ENCODE measurements at regions of chr3 and their contacts with region 1.

Region 1: GRCh38 chr3:48739955-48740823 is 23.2 kb upstream of the IP6K2 start:
- DNase-seq: peak; percentile 89 to 92
- ATAC-seq: peak; percentile 86 to 95 (median 92)
- H3K4me3 ChIP-seq: peak overlapping the region in 7 of 10 donors; percentile 0 to 27 (median 3)
- H3K27ac ChIP-seq: peak overlapping the region; percentile 51 to 92 (median 84)
- H3K4me1 ChIP-seq: peaks cover 28 to 61% (median 48%) of the 10 kb centered on the region in 9 donors
- H3K27me3 ChIP-seq: no peaks in the 10 kb centered on the region
- CTCF ChIP-seq: peak; percentile 84 to 95 (median 89)

Region 2: DNA sequence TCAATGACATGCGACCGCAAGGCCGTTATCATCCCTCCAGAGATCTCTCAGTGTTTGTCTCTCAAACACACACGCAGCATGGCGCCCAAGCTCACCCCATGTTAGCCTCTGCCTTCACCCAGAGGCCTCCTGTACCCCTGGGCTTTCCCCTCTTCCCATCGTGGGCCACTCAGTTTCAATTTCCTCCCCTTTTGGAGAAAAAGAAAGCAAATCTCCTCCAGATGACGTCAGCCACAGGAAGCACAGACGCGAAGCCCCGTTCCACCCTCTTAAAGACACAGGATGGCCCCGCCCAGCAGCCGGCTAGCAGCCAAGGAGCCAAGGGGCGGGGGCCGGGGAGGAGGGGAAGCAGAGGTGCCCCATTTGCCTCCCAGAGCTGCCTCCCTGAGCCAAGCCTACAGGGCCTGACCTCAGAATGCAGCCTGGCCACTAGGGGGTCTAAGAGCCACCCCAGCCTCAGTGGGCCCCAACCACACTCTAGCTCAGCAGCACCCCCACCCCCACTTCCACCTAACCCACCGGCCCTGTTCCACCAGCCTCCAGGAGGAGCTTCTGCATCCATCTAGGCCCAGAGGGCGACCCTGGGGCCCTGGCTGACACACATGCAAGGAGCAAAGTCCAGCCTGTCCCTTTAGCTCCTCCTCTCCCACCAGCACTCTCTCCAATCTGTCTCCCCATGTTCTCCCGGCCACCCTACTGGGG is 267.1 kb before region 1 on chr3:
- intact Hi-C with region 1: no loop called
- DNase-seq: peak; percentile 92 to 95
- ATAC-seq: peak; percentile 92 to 95 (median 94)
- H3K4me3 ChIP-seq: peak overlapping the region; percentile 58 to 81 (median 64)
- H3K27ac ChIP-seq: peak overlapping the region; percentile 89 to 99 (median 95)
- H3K4me1 ChIP-seq: peaks cover 12 to 71% (median 60%) of the 10 kb centered on the region in 9 donors
- H3K27me3 ChIP-seq: no peaks in the 10 kb centered on the region
- CTCF ChIP-seq: peak in 8 of 9 donors; percentile 24 to 66 (median 44)

Region 3: DNA sequence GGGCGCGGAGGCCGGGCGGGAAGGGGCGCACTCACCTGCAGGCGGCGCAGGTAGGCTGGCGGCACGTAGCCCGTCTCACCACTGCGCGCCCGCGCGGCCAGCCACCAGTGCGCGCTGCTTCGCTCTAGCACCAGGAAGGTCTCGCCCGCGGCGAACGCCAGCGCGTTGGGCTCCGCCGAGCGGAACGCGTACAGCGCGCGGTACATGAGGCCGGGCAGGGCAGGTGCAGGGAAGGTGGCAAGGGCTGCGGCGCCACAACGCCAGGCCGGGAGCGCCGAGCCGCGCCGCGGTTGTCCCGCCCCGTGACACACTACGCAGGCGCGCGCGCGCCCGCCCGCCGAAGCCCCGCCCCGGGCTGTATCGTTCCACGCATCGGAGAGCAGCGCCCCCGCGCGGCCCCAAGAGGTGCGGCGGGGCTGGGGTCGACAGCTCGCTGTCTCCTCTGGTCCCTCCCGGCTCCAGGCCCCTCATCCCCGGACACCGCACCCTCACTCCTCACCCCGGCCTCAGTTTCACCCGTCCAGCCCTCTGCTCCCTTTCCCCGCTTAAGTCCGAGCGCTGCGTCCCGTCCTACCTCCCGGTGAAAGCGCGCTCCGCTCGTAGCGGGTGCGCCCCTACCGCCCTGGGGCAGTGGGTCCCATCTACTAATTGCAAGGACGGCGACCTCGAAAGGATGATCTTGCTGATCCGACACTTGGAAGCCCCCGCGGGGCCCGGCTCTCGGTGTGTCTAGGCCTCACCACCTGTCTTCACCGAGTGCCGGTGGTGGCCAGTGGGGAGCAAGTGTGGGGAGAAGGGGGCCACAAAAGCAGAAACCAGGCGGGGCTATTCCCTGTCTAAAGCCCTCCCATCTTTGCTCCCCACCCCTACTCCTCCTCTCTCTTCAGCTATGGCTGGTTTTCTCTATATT is 54.3 kb before region 1 on chr3 and contains the start of gene NCKIPSD:
- intact Hi-C with region 1: loop called in 4 of 10 experiments (anchors 1 to 5 kb)
- DNase-seq: peak; percentile 87 to 94
- ATAC-seq: peak; percentile 85 to 97 (median 93)
- H3K4me3 ChIP-seq: peak within 1 kb of the TSS; percentile 63 to 99 (median 92)
- H3K27ac ChIP-seq: peak within 1 kb of the TSS; percentile 77 to 91 (median 86)
- H3K4me1 ChIP-seq: peaks cover 16 to 44% (median 34%) of the 10 kb centered on the region in 9 donors
- H3K27me3 ChIP-seq: no peaks in the 10 kb centered on the region
- CTCF ChIP-seq: peak; percentile 71 to 95 (median 84)
- total RNA-seq, gene NCKIPSD: 9.4 to 21.1 (median 15.1) TPM

Region 4: DNA sequence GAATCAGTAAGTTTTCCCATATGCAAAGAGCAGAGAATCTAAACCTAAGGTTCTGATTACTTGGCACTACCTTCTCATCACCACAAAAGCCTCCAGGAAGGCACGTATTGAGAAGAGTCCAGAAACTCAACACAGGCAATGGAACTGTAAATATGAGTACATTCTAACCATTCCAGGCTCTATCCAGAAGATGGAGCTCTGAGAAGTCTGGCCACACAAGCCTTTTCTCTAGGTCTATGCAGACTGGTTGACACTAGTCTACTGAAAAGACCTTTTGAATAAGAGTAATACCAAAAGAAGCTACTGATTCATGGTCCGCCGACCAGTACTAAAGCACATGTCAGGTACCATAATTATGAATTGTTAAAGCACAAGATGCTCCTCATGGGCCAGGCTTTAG is 42.2 kb before region 1 on chr3:
- intact Hi-C with region 1: no loop called
- DNase-seq: no peak
- ATAC-seq: no peak
- H3K4me3 ChIP-seq: no peak overlapping the region
- H3K27ac ChIP-seq: no peak overlapping the region
- H3K4me1 ChIP-seq: peaks cover 0 to 66% (median 38%) of the 10 kb centered on the region in 9 donors
- H3K27me3 ChIP-seq: no peaks in the 10 kb centered on the region
- CTCF ChIP-seq: no peak

Region 5: DNA sequence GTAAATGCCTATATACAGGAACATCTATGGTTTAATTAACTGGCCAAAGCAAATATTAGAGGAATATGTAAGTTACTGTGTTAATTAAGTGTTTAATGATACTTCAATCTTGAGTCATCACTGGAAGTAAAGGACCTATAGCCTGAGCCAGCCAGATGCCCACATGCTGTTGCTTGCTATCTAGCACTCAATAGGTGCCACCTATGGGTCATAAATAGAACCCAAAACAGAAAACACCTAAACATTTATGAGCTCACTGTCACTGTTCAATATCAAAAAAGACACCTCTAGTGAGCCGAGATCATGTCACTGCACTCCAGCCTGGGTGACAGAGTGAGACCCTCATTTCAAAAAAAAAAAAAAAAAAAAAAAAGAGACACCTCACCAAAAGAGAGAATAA is 25.2 kb after region 1 on chr3:
- intact Hi-C with region 1: loop called in 1 of 10 experiments (anchors 2 kb)
- DNase-seq: no peak
- ATAC-seq: no peak
- H3K4me3 ChIP-seq: no peak overlapping the region
- H3K27ac ChIP-seq: no peak overlapping the region
- H3K4me1 ChIP-seq: peaks cover 0 to 14% (median 0%) of the 10 kb centered on the region in 9 donors
- H3K27me3 ChIP-seq: no peaks in the 10 kb centered on the region
- CTCF ChIP-seq: peak in 6 of 9 donors; percentile 4 to 35 (median 16)

Region 6: DNA sequence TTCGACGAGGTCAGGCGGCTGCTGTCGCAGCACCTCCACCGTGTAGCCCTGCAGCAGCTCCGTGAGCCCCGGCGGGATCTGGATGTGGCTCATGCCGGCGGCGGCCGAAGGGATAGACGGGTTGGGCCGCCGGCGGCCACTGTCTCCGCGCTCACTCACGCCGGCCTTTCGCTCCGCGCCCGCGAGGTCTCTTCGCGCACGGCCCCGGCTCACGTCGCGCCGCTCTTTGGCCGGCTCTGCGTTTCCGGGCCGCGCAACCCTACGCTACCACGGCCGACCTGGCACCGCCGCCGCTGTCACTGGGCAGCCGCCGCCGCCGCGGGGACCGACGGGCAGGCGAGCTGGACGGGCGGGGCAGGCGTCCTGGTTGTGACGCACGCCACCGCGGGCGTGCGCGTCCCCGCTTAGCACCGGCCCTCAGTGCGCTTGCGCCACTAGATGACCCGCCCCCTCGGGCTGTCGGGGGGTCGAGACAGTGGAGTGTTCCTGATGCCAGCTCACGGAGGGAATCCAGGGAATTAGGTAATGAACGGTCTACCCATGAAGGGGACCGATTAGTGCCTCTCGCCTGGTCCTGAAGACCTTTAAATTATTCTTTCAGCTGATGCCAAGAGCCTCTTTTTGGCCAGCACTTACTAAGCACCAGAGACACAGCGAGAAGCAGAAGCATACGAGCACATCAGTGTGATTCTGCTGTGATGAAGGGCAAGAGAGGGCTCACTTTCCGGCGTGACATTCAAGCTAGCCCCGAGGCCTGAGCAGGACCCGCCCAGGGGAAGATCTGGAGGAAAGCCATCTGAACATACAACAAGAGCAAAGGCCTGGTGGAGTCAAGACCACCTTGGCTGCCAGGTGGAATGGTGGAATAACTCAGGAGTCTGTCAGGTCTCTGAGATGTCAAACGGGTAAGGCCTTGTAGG is 107.6 kb after region 1 on chr3 and contains the start of gene PRKAR2A:
- intact Hi-C with region 1: loop called in 1 of 10 experiments (anchors 2 kb)
- DNase-seq: peak; percentile 89 to 92
- ATAC-seq: peak; percentile 95 to 98 (median 96)
- H3K4me3 ChIP-seq: peak within 1 kb of the TSS; percentile 65 to 97 (median 87)
- H3K27ac ChIP-seq: peak within 1 kb of the TSS; percentile 90 to 99 (median 97)
- H3K4me1 ChIP-seq: peaks cover 6 to 34% (median 24%) of the 10 kb centered on the region in 9 donors
- H3K27me3 ChIP-seq: no peaks in the 10 kb centered on the region
- CTCF ChIP-seq: no peak
- total RNA-seq, gene PRKAR2A: 42.8 to 55.7 (median 44.8) TPM

Region 7: DNA sequence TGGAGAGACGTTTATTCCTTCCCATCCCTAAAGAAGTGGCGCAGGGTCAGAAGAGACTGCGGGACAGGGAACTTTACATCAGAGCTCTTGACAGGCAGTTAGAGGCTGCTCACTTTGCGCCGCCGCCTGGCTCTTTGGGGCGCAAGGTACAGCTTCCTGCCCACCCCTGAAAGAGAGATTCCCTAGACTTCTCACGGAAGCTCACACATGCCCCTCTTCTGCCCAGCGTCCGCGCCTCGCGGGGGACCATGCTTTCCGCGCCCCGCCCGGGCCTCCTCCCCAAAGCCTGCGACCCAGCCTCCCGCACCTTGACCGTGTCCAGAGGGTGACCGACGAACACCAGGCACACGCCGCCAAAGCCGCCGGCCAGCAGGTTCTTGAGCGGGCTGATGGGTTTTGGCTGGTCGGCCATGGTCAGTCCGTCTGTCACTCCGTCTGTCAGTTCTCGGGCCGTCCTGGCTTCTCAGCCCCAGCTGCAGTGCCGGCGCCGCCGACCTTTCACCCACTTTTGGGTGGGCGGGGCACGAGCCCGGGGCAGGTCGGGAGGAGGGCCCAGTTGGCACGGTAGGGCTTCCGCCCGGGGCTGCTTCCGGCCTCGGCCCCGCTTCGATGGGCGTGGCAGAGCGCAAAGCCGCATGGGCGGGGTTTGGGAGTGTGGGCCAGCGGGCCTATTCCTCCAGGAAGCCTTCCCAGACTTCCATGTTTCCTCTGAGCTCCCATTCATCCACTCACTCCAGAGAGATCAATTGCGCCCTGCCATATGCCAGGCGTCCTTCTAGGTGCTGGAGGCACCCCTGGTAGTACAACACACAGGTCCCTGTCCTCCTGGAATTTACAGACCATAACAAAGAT is 158.4 kb after region 1 on chr3 and contains the start of gene SLC25A20:
- intact Hi-C with region 1: loop called in 1 of 10 experiments (anchors 5 kb)
- DNase-seq: peak; percentile 91 to 95
- ATAC-seq: peak; percentile 97 to 99 (median 98)
- H3K4me3 ChIP-seq: peak within 1 kb of the TSS; percentile 43 to 96 (median 82)
- H3K27ac ChIP-seq: peak within 1 kb of the TSS; percentile 19 to 95 (median 90)
- H3K4me1 ChIP-seq: peaks cover 5 to 24% (median 19%) of the 10 kb centered on the region in 9 donors
- H3K27me3 ChIP-seq: no peaks in the 10 kb centered on the region
- CTCF ChIP-seq: peak in 3 of 9 donors; percentile 16 to 27 (median 22)
- total RNA-seq, gene SLC25A20: 42.5 to 129 (median 82.6) TPM

Measured in heart right ventricle (tissue), 16 donors.